Activated CD4-positive, alpha-beta T cell treated with anti-CD3 and anti-CD28 coated beads, Interleukin-2, amount 10 ng/mL, durations not matched to agents 24 days and 14 days (primary cell): ENCODE measurements at regions of chr20 and their contacts with region 1.

Region 1: DNA sequence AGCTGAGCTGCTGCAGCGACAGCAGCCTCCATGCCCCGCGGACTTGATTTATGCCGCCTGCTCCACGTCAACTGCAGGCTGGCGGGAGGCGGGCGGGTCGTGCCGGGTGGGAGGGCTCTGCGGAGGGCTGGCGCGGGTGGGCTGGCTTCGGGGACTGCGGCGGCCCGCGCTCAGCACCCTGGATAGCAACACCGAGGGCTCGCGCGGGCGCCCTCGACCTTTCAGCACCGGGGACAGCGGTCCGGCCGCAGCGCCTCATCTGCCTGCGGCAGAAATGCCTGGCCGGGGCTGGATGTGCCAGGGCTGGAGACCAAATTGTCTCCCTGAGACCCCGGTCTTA is 792 bp downstream of the SNAP25 start:
- DNase-seq: peak; percentile 93
- H3K4me3 Mint-ChIP-seq: peak overlapping the region; percentile 66
- H3K27ac Mint-ChIP-seq: peak overlapping the region; percentile 40
- H3K4me1 Mint-ChIP-seq: peaks cover 15% of the 10 kb centered on the region
- H3K27me3 Mint-ChIP-seq: peaks cover 22% of the 10 kb centered on the region

Region 2: GRCh38 chr20:10115021-10115420 is 104.4 kb before region 1 on chr20:
- intact Hi-C with region 1: loop called (anchors 10 kb)
- DNase-seq: no peak
- H3K4me3 Mint-ChIP-seq: no peak overlapping the region
- H3K27ac Mint-ChIP-seq: no peak overlapping the region
- H3K4me1 Mint-ChIP-seq: peaks cover 2% of the 10 kb centered on the region
- H3K27me3 Mint-ChIP-seq: peaks cover 4% of the 10 kb centered on the region

Region 3: DNA sequence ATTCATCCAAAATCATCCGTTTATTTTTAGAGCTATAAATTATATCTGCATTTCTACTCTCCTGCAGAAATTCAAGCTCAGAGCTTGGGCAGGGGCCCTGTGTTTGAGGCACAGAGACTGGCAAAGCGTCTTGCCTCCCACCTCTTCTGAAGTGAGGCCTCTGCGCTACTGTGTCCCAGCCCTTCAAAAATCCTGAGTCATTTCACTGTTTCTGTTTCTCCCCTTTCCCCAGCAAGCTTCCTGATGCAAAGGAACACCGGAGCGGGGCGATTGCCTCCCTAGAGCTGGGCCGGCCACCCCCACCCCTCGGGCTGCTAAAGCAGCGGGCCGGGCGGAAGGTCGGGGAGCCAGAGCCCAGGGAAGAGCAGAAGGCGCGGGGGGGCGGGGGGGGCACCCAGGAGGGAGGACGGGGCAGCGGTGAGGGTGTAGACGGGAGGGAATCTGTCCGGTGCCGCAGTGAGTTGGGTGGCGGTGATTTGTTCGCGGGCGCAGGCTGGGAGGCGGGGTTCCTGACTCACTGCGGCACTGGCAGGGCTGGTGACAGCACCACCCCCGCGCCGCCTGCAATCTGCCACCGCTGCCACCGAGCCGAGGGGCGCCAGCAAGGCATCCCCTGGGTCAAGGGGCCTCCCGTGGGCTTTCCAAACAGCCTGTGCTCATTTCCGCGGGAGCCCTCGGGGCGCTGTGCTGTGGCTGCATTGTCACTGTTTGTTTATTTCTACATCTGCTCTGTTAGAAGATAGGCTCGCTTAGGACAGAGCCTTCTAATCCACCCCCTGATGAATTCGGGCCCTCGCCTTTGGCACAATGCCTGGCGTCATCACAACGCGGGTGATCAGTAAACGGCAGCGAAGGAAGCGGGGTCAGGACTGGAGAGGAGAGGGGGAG is 47.3 kb before region 1 on chr20:
- intact Hi-C with region 1: loop called (anchors 5 kb)
- DNase-seq: peak; percentile 59
- H3K4me3 Mint-ChIP-seq: peak overlapping the region; percentile 76
- H3K27ac Mint-ChIP-seq: no peak overlapping the region
- H3K4me1 Mint-ChIP-seq: peaks cover 2% of the 10 kb centered on the region
- H3K27me3 Mint-ChIP-seq: peaks cover 24% of the 10 kb centered on the region

Region 4: DNA sequence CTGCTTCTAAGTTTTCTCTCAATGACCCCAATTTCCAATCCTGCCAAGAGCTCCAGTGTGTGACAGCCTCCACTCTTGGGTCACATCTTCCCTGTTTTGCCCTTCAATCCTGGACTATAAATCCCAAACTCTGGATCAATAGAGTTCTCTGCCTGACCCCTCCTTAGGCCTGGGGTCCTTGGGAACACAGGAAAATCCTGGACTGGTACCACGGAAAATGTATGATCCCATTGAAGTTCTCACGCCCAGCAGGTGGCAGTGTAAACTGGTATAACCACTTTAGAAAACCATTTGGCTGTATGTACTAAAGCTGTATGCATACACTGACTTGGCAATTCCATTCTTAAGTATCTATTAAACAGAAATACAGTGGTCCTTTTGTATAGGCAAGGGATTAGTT is 97.2 kb after region 1 on chr20:
- intact Hi-C with region 1: no loop called
- DNase-seq: peak; percentile 61
- H3K4me3 Mint-ChIP-seq: no peak overlapping the region
- H3K27ac Mint-ChIP-seq: no peak overlapping the region
- H3K4me1 Mint-ChIP-seq: peaks cover 3% of the 10 kb centered on the region
- H3K27me3 Mint-ChIP-seq: no peaks in the 10 kb centered on the region

Region 5: DNA sequence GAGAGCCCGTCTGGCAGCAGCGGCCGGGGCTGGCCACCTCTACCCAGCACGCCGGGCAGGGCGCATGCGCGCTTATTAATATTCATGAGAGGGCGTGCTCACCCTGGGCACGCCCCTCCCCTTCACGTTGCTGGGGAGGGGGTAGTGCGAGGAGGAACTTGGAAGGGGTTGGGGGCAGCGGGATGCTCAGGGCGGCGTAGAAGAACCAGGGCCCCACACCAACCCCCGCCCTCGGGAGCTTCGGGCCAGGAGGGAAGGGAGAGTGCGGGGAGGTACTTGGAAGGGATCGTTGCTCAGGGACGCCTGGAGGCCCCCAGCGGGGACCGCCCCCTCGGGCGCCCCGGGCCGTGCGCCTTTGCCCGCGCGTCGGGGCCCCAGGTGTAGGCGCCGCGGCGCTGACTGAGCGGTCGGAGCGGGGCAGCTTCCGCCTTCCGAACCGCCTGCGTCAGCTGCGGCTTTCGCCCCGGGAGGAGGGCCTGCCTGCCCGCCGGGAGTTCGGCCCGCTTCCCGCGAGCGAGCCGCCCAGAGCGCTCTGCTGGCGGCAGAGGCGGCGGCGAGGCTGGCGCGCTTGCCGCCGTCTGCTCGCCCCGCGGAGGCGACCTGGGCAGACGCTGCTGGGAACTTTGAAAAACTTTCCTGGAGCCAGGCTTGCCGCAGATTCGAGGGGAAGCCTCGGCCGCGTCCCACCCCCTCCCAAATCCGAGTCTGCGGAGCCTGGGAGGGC is 454.7 kb after region 1 on chr20 and contains the start of gene JAG1:
- intact Hi-C with region 1: loop called (anchors 5 kb)
- DNase-seq: peak; percentile 93
- H3K4me3 Mint-ChIP-seq: peak within 1 kb of the TSS; percentile 93
- H3K27ac Mint-ChIP-seq: peak within 1 kb of the TSS; percentile 88
- H3K4me1 Mint-ChIP-seq: peaks cover 30% of the 10 kb centered on the region
- H3K27me3 Mint-ChIP-seq: peaks cover 67% of the 10 kb centered on the region
- total RNA-seq, gene JAG1: 1.1 and 1.3 TPM in 2 replicates